Activated CD8-positive, alpha-beta T cell treated with anti-CD3 and anti-CD28 coated beads for 36 hours (primary cell): ENCODE measurements at regions of chr6 and their contacts with region 1.

Region 1: DNA sequence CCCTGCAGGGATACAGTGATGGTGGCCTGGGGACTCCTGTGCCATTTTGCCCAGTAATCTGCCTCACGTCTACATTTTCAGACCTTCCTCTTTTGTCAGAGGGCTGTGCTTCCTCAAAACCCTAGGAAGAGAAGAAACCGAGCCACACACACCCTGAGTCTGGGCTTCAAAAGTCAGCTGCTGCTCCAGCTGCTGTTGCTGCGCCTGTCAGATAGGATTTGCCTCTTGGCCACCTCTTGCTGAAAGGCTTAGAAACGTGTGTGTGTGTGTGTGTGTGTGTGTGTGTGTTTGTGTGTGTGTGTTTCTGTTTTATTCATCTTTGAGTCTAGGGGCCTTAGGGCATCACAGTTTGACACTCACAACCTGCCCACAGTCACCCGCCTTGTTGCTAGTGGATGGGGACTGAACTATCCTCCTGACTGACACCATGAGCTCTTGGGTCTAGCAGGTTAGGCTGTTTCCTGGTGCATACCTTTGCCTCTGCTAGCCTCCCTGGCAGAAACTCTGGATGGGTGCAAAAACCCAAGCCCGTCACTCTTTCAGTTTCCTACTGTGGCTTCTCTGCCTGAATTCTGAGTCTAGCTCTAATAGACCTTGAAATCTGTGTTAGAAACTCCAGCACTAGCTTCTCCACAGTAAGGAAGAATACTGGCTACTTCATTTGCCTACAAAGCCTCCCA is 94.9 kb upstream of the CEP85L start:
- DNase-seq: no peak
- ATAC-seq: no peak
- H3K4me3 Mint-ChIP-seq: no peak overlapping the region
- H3K27ac Mint-ChIP-seq: no peak overlapping the region
- H3K4me1 Mint-ChIP-seq: peaks cover 45% of the 10 kb centered on the region
- H3K27me3 Mint-ChIP-seq: no peaks in the 10 kb centered on the region
- CTCF ChIP-seq: no peak

Region 2: DNA sequence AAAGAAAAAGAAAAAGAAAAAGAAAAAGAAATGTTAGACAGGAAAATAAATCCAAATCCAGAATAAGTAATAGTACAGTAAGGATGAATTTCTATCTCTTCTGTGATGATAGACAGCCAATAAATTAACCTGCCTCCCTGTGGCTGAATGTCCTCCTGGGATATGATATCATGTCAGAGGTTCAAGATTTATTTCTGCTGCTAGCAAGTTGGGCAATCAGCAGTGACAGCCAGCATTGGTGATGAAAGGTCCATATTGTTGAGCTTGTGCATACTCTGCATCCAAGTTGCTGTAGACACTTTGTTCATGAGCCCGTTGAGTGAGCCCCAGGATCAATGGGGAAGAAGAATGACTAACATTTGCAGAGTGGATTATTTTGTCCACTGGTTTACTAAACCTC is 50.0 kb before region 1 on chr6:
- CTCF ChIA-PET with region 1: no interaction called
- POLR2A ChIA-PET with region 1: no interaction called
- intact Hi-C with region 1: no loop called
- DNase-seq: no peak
- ATAC-seq: no peak
- H3K4me3 Mint-ChIP-seq: no peak overlapping the region
- H3K27ac Mint-ChIP-seq: no peak overlapping the region
- H3K4me1 Mint-ChIP-seq: peaks cover 81% of the 10 kb centered on the region
- H3K27me3 Mint-ChIP-seq: no peaks in the 10 kb centered on the region
- CTCF ChIP-seq: no peak

Region 3: GRCh38 chr6:118735320-118735719 is 11.0 kb before region 1 on chr6:
- CTCF ChIA-PET with region 1: interaction called, 7 read pairs
- POLR2A ChIA-PET with region 1: interaction called, 10 read pairs
- intact Hi-C with region 1: no loop called
- DNase-seq: no peak
- ATAC-seq: no peak
- H3K4me3 Mint-ChIP-seq: no peak overlapping the region
- H3K27ac Mint-ChIP-seq: peak overlapping the region; percentile 65
- H3K4me1 Mint-ChIP-seq: peaks cover 43% of the 10 kb centered on the region
- H3K27me3 Mint-ChIP-seq: no peaks in the 10 kb centered on the region
- CTCF ChIP-seq: peak; percentile 46

Region 4: DNA sequence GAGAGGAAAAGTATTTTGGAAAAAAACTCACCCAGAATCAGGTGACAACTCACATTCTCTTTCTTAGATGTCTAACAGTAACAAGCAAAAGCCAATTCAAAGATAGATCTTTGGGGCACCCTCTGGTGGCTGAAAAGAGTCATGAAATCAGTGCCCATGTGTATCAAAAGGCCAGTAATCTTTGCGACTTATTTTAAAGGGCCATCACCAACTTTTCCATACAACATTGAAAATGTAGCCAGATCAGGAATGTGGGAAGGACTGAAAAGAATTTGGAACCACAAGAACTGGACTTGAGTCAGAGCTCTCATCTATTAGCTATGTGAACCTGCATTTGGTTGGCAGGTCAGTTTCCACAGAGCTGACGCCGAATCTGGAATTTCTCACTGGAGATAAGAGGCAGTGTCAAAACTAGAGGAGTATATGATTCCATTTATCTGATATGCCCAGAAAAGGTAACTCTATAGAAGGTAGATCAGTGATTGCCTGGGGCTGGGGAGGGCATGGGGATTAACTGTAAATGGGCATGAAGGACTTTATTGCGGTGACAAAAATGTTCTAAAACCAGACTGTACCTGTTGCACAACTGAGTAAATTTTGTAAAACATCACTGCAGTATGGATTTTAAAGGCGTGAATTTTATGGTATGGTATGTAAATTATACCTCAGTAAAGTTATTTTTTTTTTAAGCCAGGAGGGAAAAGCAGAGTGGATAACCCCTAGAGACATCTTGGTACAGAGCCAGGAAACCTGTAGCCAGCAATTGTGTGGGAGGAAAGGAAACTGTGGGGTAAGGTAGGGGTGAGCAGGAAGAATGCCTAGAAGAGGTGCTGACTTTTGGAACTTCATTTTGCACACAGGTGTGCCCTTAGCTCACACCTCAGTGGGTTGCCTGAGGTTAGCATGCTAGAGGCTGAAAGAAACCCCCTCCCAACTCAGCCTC is 30.6 kb after region 1 on chr6:
- CTCF ChIA-PET with region 1: no interaction called
- POLR2A ChIA-PET with region 1: no interaction called
- intact Hi-C with region 1: no loop called
- DNase-seq: peak; percentile 88
- ATAC-seq: peak; percentile 92
- H3K4me3 Mint-ChIP-seq: no peak overlapping the region
- H3K27ac Mint-ChIP-seq: peak overlapping the region; percentile 54
- H3K4me1 Mint-ChIP-seq: peaks cover 23% of the 10 kb centered on the region
- H3K27me3 Mint-ChIP-seq: no peaks in the 10 kb centered on the region
- CTCF ChIP-seq: peak; percentile 87